Left cardiac atrium (tissue), 4 donors: ENCODE measurements at regions of chr11 and their contacts with region 1.

Region 1: GRCh38 chr11:65013692-65014145 is 241 bp upstream of the ARL2 start:
- DNase-seq: peak; percentile 96
- ATAC-seq: peak; percentile 95

Region 2: DNA sequence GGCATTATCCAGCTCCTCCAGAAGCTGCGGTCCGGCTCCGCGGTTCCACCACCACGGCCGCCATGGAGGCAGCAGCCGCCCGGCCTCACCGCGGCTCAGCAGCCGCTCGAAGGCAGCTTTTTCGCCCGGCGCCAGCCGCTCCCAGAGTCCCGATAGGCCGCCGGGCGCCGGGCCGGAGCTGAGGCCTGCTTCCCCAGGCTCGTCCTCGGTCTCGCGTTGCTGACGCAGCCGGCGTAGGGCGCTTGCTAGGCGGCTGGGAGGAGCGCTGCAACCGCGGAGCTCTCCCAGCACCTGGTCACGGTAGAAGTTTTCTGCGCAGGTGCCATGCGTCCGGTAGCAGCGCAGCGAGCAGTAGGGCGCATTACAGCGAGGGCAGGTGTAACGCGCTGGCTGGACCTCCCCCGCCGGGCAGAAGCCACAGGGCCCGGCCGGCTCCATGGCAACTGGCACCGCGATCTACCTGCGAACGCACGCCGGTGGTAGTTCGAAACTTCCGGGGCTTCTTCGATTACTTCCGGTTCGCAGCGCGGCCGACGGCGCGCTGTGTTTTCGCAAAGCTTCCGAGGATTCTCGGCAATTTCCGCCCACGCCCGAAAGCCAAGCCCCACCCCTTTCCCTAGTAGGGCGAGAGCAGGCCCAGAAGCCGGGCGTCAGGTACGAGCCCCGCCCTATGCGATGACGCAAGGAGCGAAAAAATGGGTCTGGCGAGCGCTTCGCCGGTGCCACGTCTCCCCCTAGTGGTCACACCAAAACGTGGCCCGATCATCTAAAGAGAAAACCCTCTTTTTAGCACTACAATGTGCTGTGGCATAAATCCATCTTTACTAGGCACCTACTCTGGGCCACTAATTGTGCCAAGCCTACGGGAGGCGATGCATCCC is 103.7 kb after region 1 on chr11 and contains the start of gene ZNHIT2:
- intact Hi-C with region 1: loop called in 1 of 2 experiments (anchors 5 kb)
- DNase-seq: peak; percentile 100
- ATAC-seq: peak; percentile 86 to 87
- total RNA-seq, gene ZNHIT2: 6.6 to 8.2 TPM

Region 3: DNA sequence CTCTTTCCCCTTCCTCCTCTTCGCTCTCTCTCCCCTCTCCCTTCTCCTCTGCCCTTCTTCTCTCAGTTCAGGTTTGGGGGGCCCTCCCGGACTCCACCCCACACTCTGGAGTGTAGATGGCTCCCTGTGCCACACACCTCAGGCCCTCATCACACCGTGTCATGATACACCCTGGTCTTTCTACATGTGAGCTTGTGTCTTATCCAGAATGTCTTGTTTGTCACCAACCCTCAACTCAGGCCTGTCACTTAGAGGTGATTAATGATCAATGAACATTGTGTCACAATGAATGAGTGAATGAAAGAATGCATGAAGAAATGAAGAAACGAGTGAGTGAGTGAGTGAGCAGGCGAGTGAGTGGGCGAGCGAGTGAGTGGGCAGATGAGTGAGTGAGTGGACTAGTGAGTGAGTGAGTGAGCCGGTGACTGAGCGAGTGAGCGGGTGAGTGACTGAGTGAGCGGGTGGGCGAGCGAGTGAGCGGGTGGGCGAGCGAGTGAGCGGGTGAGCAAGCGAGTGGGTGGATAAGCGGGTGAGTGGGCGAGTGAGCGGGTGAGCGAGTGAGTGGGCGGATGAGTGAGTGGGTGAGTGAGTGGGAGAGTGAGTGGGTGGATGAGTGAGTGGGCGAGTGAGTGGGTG is 201.8 kb after region 1 on chr11:
- intact Hi-C with region 1: no loop called
- DNase-seq: no peak
- ATAC-seq: no peak